ENCODE measurements at regions of chr17 and their contacts with region 1.

Region 1: GRCh38 chr17:7561028-7561575 is 617 bp upstream of the SENP3 start:
- DNase-seq: peak; percentile 57 to 94
- H3K4me3 ChIP-seq: peak overlapping the region; percentile 67 to 92
- H3K27ac ChIP-seq: peak overlapping the region; percentile 90 to 97
- H3K4me1 ChIP-seq: peaks cover 39 to 56% of the 10 kb centered on the region in 2 donors
- H3K27me3 ChIP-seq: no peaks in the 10 kb centered on the region
- CTCF ChIP-seq: peak; percentile 84 to 96 (median 84)

Region 2: GRCh38 chr17:7403977-7404736 is 156.9 kb before region 1 on chr17 and contains the start of gene TMEM256:
- intact Hi-C with region 1: loop called (anchors 2 kb)
- DNase-seq: peak; percentile 97 to 100
- H3K4me3 ChIP-seq: peak within 1 kb of the TSS; percentile 69 to 85
- H3K27ac ChIP-seq: peak within 1 kb of the TSS; percentile 89 to 92
- H3K4me1 ChIP-seq: peaks cover 0 to 22% of the 10 kb centered on the region in 2 donors
- H3K27me3 ChIP-seq: no peaks in the 10 kb centered on the region
- CTCF ChIP-seq: peak in 2 of 3 experiments; percentile 5 to 25
- total RNA-seq, gene TMEM256: 241 TPM

Region 3: GRCh38 chr17:7435221-7435675 is 125.9 kb before region 1 on chr17 and contains the start of gene TMEM102:
- intact Hi-C with region 1: loop called (anchors 2 kb)
- DNase-seq: peak; percentile 92 to 98
- H3K4me3 ChIP-seq: peak within 1 kb of the TSS; percentile 59 to 69
- H3K27ac ChIP-seq: peak within 1 kb of the TSS; percentile 45 to 52
- H3K4me1 ChIP-seq: peaks cover 14 to 30% of the 10 kb centered on the region in 2 donors
- H3K27me3 ChIP-seq: peaks cover 14% of the 10 kb centered on the region
- CTCF ChIP-seq: no peak
- total RNA-seq, gene TMEM102: 20.4 TPM

Region 4: GRCh38 chr17:7515911-7516610 is 45.0 kb before region 1 on chr17:
- intact Hi-C with region 1: loop called (anchors 1 kb)
- DNase-seq: no peak
- H3K4me3 ChIP-seq: no peak overlapping the region
- H3K27ac ChIP-seq: peak overlapping the region in 1 of 2 donors; percentile 18
- H3K4me1 ChIP-seq: no peaks in the 10 kb centered on the region
- H3K27me3 ChIP-seq: no peaks in the 10 kb centered on the region
- CTCF ChIP-seq: no peak

Region 5: GRCh38 chr17:7548585-7549400 is 12.3 kb before region 1 on chr17 and contains the start of gene TNFSF12:
- intact Hi-C with region 1: loop called (anchors 1 kb)
- DNase-seq: peak in 1 of 2 donors; percentile 81
- H3K4me3 ChIP-seq: peak within 1 kb of the TSS; percentile 65 to 74
- H3K27ac ChIP-seq: peak within 1 kb of the TSS; percentile 89 to 92
- H3K4me1 ChIP-seq: peaks cover 0 to 8% of the 10 kb centered on the region in 2 donors
- H3K27me3 ChIP-seq: no peaks in the 10 kb centered on the region
- CTCF ChIP-seq: peak in 1 of 3 experiments; percentile 14
- total RNA-seq, gene TNFSF12: 88.6 TPM

Region 6: DNA sequence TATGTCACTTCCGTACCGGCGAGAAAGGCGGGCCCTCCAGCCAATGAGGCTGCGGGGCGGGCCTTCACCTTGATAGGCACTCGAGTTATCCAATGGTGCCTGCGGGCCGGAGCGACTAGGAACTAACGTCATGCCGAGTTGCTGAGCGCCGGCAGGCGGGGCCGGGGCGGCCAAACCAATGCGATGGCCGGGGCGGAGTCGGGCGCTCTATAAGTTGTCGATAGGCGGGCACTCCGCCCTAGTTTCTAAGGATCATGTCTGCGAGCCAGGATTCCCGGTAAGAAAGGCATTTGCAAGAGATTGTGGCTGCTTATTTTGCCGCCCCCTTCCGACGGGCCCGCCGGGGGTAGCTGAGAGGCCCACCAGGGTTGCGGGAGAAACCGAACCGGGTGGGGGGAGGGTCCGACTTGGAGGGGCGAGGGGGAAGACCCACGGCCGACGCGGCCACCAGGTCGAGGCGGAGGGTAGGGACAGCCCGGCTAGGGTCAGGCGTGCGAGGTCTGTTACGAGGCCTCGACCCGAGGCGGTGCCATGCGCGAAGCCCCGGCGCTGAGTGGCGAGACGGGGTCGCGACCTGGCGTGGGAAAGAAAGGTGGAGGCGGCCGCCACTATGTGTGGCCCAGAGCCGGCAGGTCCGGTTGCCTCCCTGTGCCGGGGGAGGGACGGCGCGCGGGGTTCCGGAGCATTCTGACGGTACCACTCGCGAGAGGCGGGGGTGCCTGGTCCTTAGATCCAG is 11.7 kb after region 1 on chr17:
- intact Hi-C with region 1: loop called (anchors 1 kb)
- DNase-seq: peak; percentile 99 to 100
- H3K4me3 ChIP-seq: peak overlapping the region; percentile 78 to 94
- H3K27ac ChIP-seq: peak overlapping the region; percentile 93 to 99
- H3K4me1 ChIP-seq: peaks cover 0 to 15% of the 10 kb centered on the region in 2 donors
- H3K27me3 ChIP-seq: no peaks in the 10 kb centered on the region
- CTCF ChIP-seq: no peak